B cell (primary cell): ENCODE measurements at regions of chr12 and their contacts with region 1.

Region 1: GRCh38 chr12:57462251-57462911 is 2.8 kb downstream of the GLI1 start:
- DNase-seq: peak; percentile 96
- ATAC-seq: peak; percentile 64
- H3K4me3 ChIP-seq: peak overlapping the region; percentile 58 to 93 (median 81)
- H3K4me3 Mint-ChIP-seq: peak overlapping the region; percentile 92
- H3K27ac ChIP-seq: peak overlapping the region; percentile 15 to 58
- H3K27ac Mint-ChIP-seq: peak overlapping the region; percentile 93
- H3K4me1 ChIP-seq: peaks cover 23 to 48% of the 10 kb centered on the region in 2 donors
- H3K4me1 Mint-ChIP-seq: peaks cover 40% of the 10 kb centered on the region
- H3K27me3 ChIP-seq: no peaks in the 10 kb centered on the region
- H3K27me3 Mint-ChIP-seq: no peaks in the 10 kb centered on the region
- CTCF ChIP-seq: peak; percentile 88

Region 2: GRCh38 chr12:57238854-57239554 is 223.4 kb before region 1 on chr12:
- CTCF ChIA-PET with region 1: interaction called, 8 read pairs
- POLR2A ChIA-PET with region 1: interaction called, 5 read pairs
- intact Hi-C with region 1: loop called (anchors 1 kb)
- DNase-seq: peak; percentile 93
- ATAC-seq: peak; percentile 46
- H3K4me3 ChIP-seq: peak overlapping the region; percentile 19 to 79 (median 75)
- H3K4me3 Mint-ChIP-seq: peak overlapping the region; percentile 89
- H3K27ac ChIP-seq: no peak overlapping the region
- H3K27ac Mint-ChIP-seq: peak overlapping the region; percentile 92
- H3K4me1 ChIP-seq: peaks cover 92 to 99% of the 10 kb centered on the region in 2 donors
- H3K4me1 Mint-ChIP-seq: peaks cover 92% of the 10 kb centered on the region
- H3K27me3 ChIP-seq: peaks cover 0 to 70% (median 30%) of the 10 kb centered on the region in 4 experiments
- H3K27me3 Mint-ChIP-seq: peaks cover 12% of the 10 kb centered on the region
- CTCF ChIP-seq: peak; percentile 100

Region 3: GRCh38 chr12:57280211-57281062 is 181.9 kb before region 1 on chr12:
- CTCF ChIA-PET with region 1: interaction called, 6 read pairs
- POLR2A ChIA-PET with region 1: interaction called, 7 read pairs
- intact Hi-C with region 1: loop called (anchors 1 kb)
- DNase-seq: peak; percentile 75
- ATAC-seq: peak; percentile 95
- H3K4me3 ChIP-seq: no peak overlapping the region
- H3K4me3 Mint-ChIP-seq: peak overlapping the region; percentile 71
- H3K27ac ChIP-seq: peak overlapping the region; percentile 53 to 71
- H3K27ac Mint-ChIP-seq: peak overlapping the region; percentile 90
- H3K4me1 ChIP-seq: peaks cover 15 to 17% of the 10 kb centered on the region in 2 donors
- H3K4me1 Mint-ChIP-seq: peaks cover 30% of the 10 kb centered on the region
- H3K27me3 ChIP-seq: no peaks in the 10 kb centered on the region
- H3K27me3 Mint-ChIP-seq: no peaks in the 10 kb centered on the region
- CTCF ChIP-seq: no peak

Region 4: GRCh38 chr12:57476162-57476992 is 14.0 kb after region 1 on chr12:
- CTCF ChIA-PET with region 1: interaction called, 166 read pairs
- POLR2A ChIA-PET with region 1: interaction called, 39 read pairs
- intact Hi-C with region 1: loop called (anchors 1 kb)
- DNase-seq: peak; percentile 65
- ATAC-seq: peak; percentile 25
- H3K4me3 ChIP-seq: peak overlapping the region; percentile 78 to 94 (median 85)
- H3K4me3 Mint-ChIP-seq: peak overlapping the region; percentile 99
- H3K27ac ChIP-seq: peak overlapping the region; percentile 91 to 99
- H3K27ac Mint-ChIP-seq: peak overlapping the region; percentile 98
- H3K4me1 ChIP-seq: peaks cover 63 to 84% of the 10 kb centered on the region in 2 donors
- H3K4me1 Mint-ChIP-seq: peaks cover 81% of the 10 kb centered on the region
- H3K27me3 ChIP-seq: no peaks in the 10 kb centered on the region
- H3K27me3 Mint-ChIP-seq: no peaks in the 10 kb centered on the region
- CTCF ChIP-seq: peak; percentile 87

Region 5: DNA sequence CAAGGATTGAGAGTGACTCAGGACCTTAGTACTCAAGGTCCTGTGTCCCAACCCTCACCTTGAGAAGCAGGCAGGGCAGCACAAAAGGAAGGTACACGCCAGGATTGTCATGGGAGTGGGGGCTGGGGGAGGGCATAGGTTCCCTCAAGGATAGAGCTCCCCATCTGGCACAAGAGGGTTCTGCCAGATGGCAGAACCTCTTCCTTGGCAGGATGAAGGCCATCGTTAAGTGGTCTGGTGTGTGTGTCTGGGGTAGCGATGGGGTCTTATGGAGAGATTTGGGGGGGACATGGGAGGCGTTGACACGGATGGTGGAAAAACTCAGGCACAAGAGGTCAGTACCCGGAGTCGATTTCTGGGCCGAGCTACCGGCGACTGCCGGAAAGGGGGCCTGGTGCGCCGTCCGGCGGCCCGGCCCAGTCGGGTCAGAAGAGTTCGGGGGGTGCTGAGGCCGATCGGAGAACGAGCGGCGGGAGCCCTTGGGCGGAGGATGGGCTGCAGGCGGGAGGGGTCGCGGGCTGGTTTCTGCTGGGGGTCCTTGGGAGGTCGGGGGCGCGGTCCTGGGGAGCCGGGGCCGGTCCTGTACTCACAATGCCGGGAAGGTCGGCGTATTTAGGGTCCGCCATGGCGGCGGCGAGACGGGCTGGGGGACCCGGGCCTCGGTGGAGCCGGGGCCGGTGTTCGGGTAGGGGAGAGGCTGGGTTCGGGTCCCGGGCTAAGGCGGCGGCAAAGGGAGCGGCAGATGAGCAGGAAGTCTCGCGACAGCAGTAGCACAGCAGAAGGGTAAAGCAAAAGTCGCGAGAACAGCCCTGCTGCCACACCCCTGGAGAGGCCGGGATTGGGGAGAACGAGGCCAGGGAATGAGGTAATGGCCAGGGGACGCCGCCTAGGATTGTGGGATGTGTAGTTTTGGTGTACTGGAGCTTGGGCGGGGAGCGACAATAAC is 84.3 kb after region 1 on chr12 and contains the start of gene DCTN2:
- CTCF ChIA-PET with region 1: interaction called, 4 read pairs
- POLR2A ChIA-PET with region 1: no interaction called
- intact Hi-C with region 1: loop called (anchors 1 kb)
- DNase-seq: peak; percentile 94
- ATAC-seq: peak; percentile 97
- H3K4me3 ChIP-seq: peak within 1 kb of the TSS; percentile 68 to 96 (median 85)
- H3K4me3 Mint-ChIP-seq: peak within 1 kb of the TSS; percentile 99
- H3K27ac ChIP-seq: peak within 1 kb of the TSS; percentile 58 to 90
- H3K27ac Mint-ChIP-seq: peak within 1 kb of the TSS; percentile 87
- H3K4me1 ChIP-seq: peaks cover 21 to 27% of the 10 kb centered on the region in 2 donors
- H3K4me1 Mint-ChIP-seq: peaks cover 51% of the 10 kb centered on the region
- H3K27me3 ChIP-seq: peaks cover 0 to 26% (median 10%) of the 10 kb centered on the region in 4 experiments
- H3K27me3 Mint-ChIP-seq: peaks cover 18% of the 10 kb centered on the region
- CTCF ChIP-seq: no peak
- total RNA-seq, gene DCTN2: 94.3 and 97.6 TPM in 2 replicates

Region 6: DNA sequence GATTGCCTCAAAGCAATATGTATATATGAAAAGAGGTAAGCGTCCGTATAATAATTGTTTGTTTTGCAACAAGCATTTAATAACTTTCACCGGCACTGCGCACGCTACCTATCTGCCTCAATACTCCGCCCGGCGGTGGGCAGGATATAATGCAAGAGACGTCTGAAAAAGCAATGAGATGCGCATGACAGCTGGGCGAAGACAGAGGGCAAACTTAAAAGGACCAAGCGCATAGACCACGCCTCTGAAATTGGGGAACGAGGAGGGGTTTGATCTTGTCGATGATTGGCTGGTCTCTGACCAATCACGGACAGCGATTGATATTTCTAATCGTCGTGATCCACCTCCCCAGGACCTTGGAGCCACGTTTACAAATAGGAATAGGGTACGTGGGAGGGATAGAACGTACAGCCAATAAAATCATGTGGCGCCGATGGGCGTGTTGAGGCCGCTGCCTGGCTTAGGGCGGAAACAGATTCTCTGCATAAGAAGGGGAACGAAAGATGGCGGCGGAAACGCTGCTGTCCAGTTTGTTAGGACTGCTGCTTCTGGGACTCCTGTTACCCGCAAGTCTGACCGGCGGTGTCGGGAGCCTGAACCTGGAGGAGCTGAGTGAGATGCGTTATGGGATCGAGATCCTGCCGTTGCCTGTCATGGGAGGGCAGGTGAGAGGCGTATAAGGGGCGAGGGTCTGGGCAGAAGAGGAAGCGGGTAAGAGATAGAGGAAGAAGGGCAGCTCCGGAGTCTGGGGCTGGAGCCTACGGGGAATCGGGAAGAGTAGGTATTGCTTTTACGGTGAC is 231.5 kb after region 1 on chr12 and contains the start of gene OS9:
- CTCF ChIA-PET with region 1: no interaction called
- POLR2A ChIA-PET with region 1: no interaction called
- intact Hi-C with region 1: loop called (anchors 1 kb)
- DNase-seq: peak; percentile 99
- ATAC-seq: peak; percentile 92
- H3K4me3 ChIP-seq: peak within 1 kb of the TSS; percentile 80 to 93 (median 89)
- H3K4me3 Mint-ChIP-seq: no peak within 1 kb of the TSS
- H3K27ac ChIP-seq: peak within 1 kb of the TSS; percentile 62 to 78
- H3K27ac Mint-ChIP-seq: no peak within 1 kb of the TSS
- H3K4me1 ChIP-seq: peaks cover 13 to 17% of the 10 kb centered on the region in 2 donors
- H3K4me1 Mint-ChIP-seq: peaks cover 13% of the 10 kb centered on the region
- H3K27me3 ChIP-seq: no peaks in the 10 kb centered on the region
- H3K27me3 Mint-ChIP-seq: peaks cover 13% of the 10 kb centered on the region
- CTCF ChIP-seq: peak; percentile 82
- total RNA-seq, gene OS9: 182 and 200 TPM in 2 replicates